Activated CD4-positive, alpha-beta memory T cell treated with anti-CD3 and anti-CD28 coated beads for 36 hours (primary cell): ENCODE measurements at regions of chr2 and their contacts with region 1.

Region 1: GRCh38 chr2:106193977-106194778 is at the start of gene UXS1:
- DNase-seq: peak; percentile 99
- H3K4me3 Mint-ChIP-seq: peak within 1 kb of the TSS; percentile 84
- H3K27ac Mint-ChIP-seq: peak within 1 kb of the TSS; percentile 87
- H3K4me1 Mint-ChIP-seq: peaks cover 40% of the 10 kb centered on the region
- H3K27me3 Mint-ChIP-seq: peaks cover 2% of the 10 kb centered on the region
- total RNA-seq, gene UXS1: 39.2 to 41.5 TPM

Region 2: GRCh38 chr2:105797298-105797819 is 396.8 kb before region 1 on chr2:
- CTCF ChIA-PET with region 1: no interaction called
- POLR2A ChIA-PET with region 1: interaction called, 3 read pairs
- intact Hi-C with region 1: loop called (anchors 5 kb)
- DNase-seq: peak; percentile 68
- H3K4me3 Mint-ChIP-seq: peak overlapping the region; percentile 52
- H3K27ac Mint-ChIP-seq: peak overlapping the region; percentile 92
- H3K4me1 Mint-ChIP-seq: peaks cover 94% of the 10 kb centered on the region
- H3K27me3 Mint-ChIP-seq: no peaks in the 10 kb centered on the region

Region 3: GRCh38 chr2:106137731-106138521 is 56.3 kb before region 1 on chr2:
- CTCF ChIA-PET with region 1: interaction called, 4 read pairs
- POLR2A ChIA-PET with region 1: interaction called, 41 read pairs
- intact Hi-C with region 1: loop called (anchors 1 kb)
- DNase-seq: peak; percentile 44
- H3K4me3 Mint-ChIP-seq: peak overlapping the region; percentile 78
- H3K27ac Mint-ChIP-seq: peak overlapping the region; percentile 91
- H3K4me1 Mint-ChIP-seq: peaks cover 51% of the 10 kb centered on the region
- H3K27me3 Mint-ChIP-seq: no peaks in the 10 kb centered on the region

Region 4: GRCh38 chr2:106147159-106147558 is 47.0 kb before region 1 on chr2:
- CTCF ChIA-PET with region 1: no interaction called
- POLR2A ChIA-PET with region 1: interaction called, 41 read pairs
- intact Hi-C with region 1: loop called (anchors 1 kb)
- DNase-seq: no peak
- H3K4me3 Mint-ChIP-seq: no peak overlapping the region
- H3K27ac Mint-ChIP-seq: peak overlapping the region; percentile 85
- H3K4me1 Mint-ChIP-seq: peaks cover 51% of the 10 kb centered on the region
- H3K27me3 Mint-ChIP-seq: no peaks in the 10 kb centered on the region

Region 5: GRCh38 chr2:106160786-106161261 is 33.4 kb before region 1 on chr2:
- CTCF ChIA-PET with region 1: interaction called, 7 read pairs
- POLR2A ChIA-PET with region 1: interaction called, 52 read pairs
- intact Hi-C with region 1: loop called (anchors 1 kb)
- DNase-seq: peak; percentile 73
- H3K4me3 Mint-ChIP-seq: peak overlapping the region; percentile 80
- H3K27ac Mint-ChIP-seq: peak overlapping the region; percentile 91
- H3K4me1 Mint-ChIP-seq: peaks cover 85% of the 10 kb centered on the region
- H3K27me3 Mint-ChIP-seq: no peaks in the 10 kb centered on the region

Region 6: DNA sequence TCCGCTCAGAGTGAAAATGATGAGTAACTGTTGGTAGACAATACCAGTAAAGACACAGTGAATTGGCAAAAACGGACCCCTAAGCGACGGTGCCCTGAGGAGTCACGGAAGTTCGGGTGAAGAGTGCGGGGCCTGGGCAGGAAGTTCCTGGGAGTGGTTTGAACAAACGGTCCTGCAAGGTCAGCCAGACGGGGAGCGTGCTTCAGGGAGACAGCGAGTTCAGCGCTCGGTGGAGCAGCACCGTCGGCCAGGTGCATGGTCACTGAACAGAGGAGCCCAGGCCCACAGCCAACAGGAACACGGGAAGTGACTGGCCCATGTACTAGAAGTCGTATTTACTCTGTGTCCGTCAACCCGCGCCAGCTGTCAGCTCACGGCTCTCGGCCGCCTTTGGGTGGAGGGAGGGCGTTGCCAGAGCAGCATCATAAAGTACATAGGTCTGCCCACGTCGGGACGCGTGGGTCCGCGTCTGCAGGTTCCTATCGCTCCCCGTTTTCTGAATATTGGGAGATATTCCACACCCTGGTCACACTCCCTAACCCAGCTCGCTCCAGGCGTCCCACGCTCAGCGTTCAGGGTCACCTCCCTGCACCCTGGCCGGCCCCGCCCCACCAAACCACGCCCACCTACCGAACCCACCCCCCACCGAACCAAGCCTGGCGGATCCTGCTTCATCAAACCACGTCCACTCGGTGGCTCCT is 75.6 kb after region 1 on chr2:
- CTCF ChIA-PET with region 1: no interaction called
- POLR2A ChIA-PET with region 1: no interaction called
- intact Hi-C with region 1: loop called (anchors 5 kb)
- DNase-seq: peak; percentile 67
- H3K4me3 Mint-ChIP-seq: peak overlapping the region; percentile 83
- H3K27ac Mint-ChIP-seq: peak overlapping the region; percentile 14
- H3K4me1 Mint-ChIP-seq: peaks cover 3% of the 10 kb centered on the region
- H3K27me3 Mint-ChIP-seq: peaks cover 3% of the 10 kb centered on the region